ENCODE measurements at regions of chr2 and their contacts with region 1.

Region 1: DNA sequence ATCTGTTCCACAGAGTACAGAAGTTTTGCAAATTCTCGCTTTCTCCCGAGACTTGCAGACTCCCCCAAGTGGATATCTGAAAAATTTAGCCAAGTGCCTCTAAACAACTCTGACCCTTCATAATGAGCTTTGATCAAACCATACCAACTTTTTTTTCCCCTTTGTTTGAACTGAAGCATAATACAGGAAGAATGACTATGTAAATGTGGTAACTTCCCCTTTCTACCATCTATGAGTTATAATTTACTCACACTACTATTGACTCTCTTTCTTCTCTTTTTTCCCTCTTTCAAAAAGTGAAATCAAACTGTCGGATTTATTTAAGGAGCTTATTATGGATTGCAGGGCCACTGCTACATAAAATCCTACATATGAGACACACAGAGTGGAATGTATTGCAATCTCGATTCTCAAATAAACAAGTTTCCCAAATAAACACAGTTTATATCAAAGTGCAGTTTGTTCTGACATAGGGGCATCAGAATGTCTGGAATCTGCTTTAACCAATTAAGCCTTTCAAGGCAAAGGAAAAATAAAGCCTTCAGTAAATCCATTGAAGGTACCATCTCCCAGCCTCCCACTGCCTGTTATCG is 1.4 kb upstream of the ZNF804A start:
- DNase-seq: peak; percentile 80
- ATAC-seq: peak; percentile 78
- H3K4me3 ChIP-seq: peak overlapping the region; percentile 63
- H3K27ac ChIP-seq: peak overlapping the region; percentile 88
- H3K4me1 ChIP-seq: peaks cover 13% of the 10 kb centered on the region
- H3K27me3 ChIP-seq: no peaks in the 10 kb centered on the region
- CTCF ChIP-seq: peak; percentile 61

Region 2: DNA sequence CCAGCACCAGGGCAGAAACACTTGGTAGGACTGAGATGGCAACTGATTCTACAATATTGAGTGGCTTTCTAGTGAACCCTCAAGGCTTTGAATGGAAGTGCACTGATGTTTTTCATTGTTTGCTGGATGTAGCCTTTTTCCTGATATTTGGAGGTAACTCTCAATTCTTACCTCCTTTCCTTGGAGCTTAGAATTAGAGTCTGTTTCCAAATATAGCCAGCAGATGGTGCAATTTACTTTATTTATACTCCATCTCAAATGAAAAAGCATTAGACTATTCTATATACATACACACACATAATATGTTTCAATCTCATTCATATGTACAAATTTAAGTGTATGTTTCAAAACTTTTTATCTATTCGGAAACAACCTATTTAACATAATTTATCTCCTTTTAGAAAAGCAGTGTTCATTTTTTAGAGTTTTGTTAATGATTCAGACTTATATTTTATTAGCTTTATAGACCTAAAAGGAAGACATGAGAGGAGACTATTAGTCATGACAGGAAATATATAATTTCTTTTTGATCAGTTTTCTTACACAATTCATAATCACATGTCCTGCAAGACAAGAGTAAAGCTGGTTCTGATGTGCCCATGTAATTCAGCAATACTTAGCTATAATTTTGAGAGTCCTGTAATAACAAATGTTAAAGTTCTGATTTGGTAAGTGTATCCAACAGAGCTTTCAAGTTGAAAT is 1347.9 kb before region 1 on chr2:
- CTCF ChIA-PET with region 1: no interaction called
- POLR2A ChIA-PET with region 1: no interaction called
- intact Hi-C with region 1: loop called (anchors 10 kb)
- DNase-seq: peak; percentile 69
- ATAC-seq: peak; percentile 70
- H3K4me3 ChIP-seq: no peak overlapping the region
- H3K27ac ChIP-seq: no peak overlapping the region
- H3K4me1 ChIP-seq: no peaks in the 10 kb centered on the region
- H3K27me3 ChIP-seq: no peaks in the 10 kb centered on the region
- CTCF ChIP-seq: peak; percentile 81

Region 3: DNA sequence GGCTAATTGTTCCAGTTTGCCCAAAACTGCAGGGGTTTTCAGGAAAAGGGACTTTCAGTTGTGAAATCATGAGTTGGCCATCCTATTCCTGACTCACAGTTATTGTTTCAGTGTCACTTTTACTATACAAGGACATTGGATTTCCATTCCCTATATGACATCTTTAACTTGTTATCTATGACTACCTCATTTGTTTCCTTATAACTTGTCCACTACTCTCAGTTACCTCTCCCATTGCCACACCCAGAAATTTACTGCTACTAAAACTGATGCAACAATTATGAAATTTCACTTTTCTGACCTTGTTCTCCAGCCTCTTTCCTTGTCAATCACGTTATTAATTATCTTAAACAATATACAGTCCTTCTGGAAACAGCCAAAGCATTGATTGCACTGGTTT is 115.0 kb before region 1 on chr2:
- CTCF ChIA-PET with region 1: no interaction called
- POLR2A ChIA-PET with region 1: no interaction called
- intact Hi-C with region 1: loop called (anchors 1 kb)
- DNase-seq: peak; percentile 4
- ATAC-seq: peak; percentile 68
- H3K4me3 ChIP-seq: no peak overlapping the region
- H3K27ac ChIP-seq: peak overlapping the region; percentile 53
- H3K4me1 ChIP-seq: peaks cover 6% of the 10 kb centered on the region; the same call in 1 of the 2 replicates
- H3K27me3 ChIP-seq: no peaks in the 10 kb centered on the region
- CTCF ChIP-seq: no peak

Region 4: GRCh38 chr2:184554733-184555132 is 42.2 kb before region 1 on chr2:
- CTCF ChIA-PET with region 1: no interaction called
- POLR2A ChIA-PET with region 1: interaction called, 8 read pairs
- intact Hi-C with region 1: loop called (anchors 1 kb)
- DNase-seq: peak; percentile 93
- ATAC-seq: peak; percentile 94
- H3K4me3 ChIP-seq: no peak overlapping the region
- H3K27ac ChIP-seq: peak overlapping the region; percentile 91
- H3K4me1 ChIP-seq: peaks cover 26% of the 10 kb centered on the region
- H3K27me3 ChIP-seq: no peaks in the 10 kb centered on the region
- CTCF ChIP-seq: no peak

Region 5: GRCh38 chr2:186059096-186059495 is 1462.2 kb after region 1 on chr2:
- CTCF ChIA-PET with region 1: no interaction called
- POLR2A ChIA-PET with region 1: no interaction called
- intact Hi-C with region 1: no loop called
- DNase-seq: peak; percentile 47
- ATAC-seq: no peak
- H3K4me3 ChIP-seq: no peak overlapping the region
- H3K27ac ChIP-seq: no peak overlapping the region
- H3K4me1 ChIP-seq: peaks cover 19% of the 10 kb centered on the region
- H3K27me3 ChIP-seq: no peaks in the 10 kb centered on the region
- CTCF ChIP-seq: no peak

Measured in PC-3 (cell line).